Activated CD4-positive, alpha-beta memory T cell treated with anti-CD3 and anti-CD28 coated beads for 36 hours (primary cell): ENCODE measurements at regions of chr3 and their contacts with region 1.

Region 1: DNA sequence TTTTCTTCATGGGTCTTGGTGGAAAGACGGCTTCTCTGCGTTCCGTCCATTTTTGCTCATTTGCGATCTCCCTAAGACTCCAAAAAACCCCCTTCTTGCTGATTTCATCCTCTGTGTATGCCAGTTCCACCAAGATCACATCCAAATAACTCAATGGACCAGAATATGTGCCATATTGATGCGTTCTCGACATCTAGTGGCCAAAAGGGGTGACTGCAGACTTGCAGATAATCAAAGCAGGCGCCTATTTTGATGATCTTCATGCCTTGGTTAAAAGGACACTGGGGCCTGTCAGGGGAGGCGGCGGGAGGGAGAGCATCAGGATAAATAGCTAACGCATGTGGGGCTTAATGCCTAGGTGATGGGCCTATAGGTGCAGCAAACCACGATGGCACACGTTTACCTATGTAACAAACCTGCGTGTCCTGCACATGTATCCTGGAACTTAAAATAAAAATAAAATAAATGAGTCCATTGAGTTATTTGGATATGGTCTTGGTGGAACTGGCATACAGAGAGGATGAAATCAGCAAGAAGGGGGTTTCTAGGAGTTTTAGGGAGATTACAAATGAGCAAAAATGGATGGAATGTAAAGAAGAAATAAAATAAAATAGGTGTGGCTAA is 104.2 kb upstream of the RAD18 start:
- DNase-seq: peak; percentile 40
- H3K4me3 Mint-ChIP-seq: no peak overlapping the region
- H3K27ac Mint-ChIP-seq: no peak overlapping the region
- H3K4me1 Mint-ChIP-seq: no peaks in the 10 kb centered on the region
- H3K27me3 Mint-ChIP-seq: no peaks in the 10 kb centered on the region

Region 2: GRCh38 chr3:8970971-8971589 is 96.4 kb before region 1 on chr3:
- CTCF ChIA-PET with region 1: interaction called, 3 read pairs
- POLR2A ChIA-PET with region 1: no interaction called
- intact Hi-C with region 1: loop called (anchors 1 kb)
- DNase-seq: peak; percentile 79
- H3K4me3 Mint-ChIP-seq: no peak overlapping the region
- H3K27ac Mint-ChIP-seq: no peak overlapping the region
- H3K4me1 Mint-ChIP-seq: peaks cover 3% of the 10 kb centered on the region
- H3K27me3 Mint-ChIP-seq: peaks cover 2% of the 10 kb centered on the region

Region 3: GRCh38 chr3:9142362-9142761 is 74.9 kb after region 1 on chr3:
- CTCF ChIA-PET with region 1: no interaction called
- POLR2A ChIA-PET with region 1: no interaction called
- intact Hi-C with region 1: no loop called
- DNase-seq: no peak
- H3K4me3 Mint-ChIP-seq: no peak overlapping the region
- H3K27ac Mint-ChIP-seq: no peak overlapping the region
- H3K4me1 Mint-ChIP-seq: no peaks in the 10 kb centered on the region
- H3K27me3 Mint-ChIP-seq: peaks cover 7% of the 10 kb centered on the region